ENCODE measurements at regions of chr19 and their contacts with region 1.

Region 1: GRCh38 chr19:11293433-11294389 is 2.2 kb upstream of the TSPAN16 start:
- DNase-seq: peak; percentile 78 to 86
- ATAC-seq: peak; percentile 83 to 90
- H3K4me3 ChIP-seq: peak overlapping the region in 2 of 4 donors; percentile 9 to 24
- H3K27ac ChIP-seq: peak overlapping the region in 3 of 4 donors; percentile 38 to 67 (median 59)
- H3K4me1 ChIP-seq: no peaks in the 10 kb centered on the region
- H3K27me3 ChIP-seq: peaks cover 0 to 5% (median 0%) of the 10 kb centered on the region in 3 donors
- CTCF ChIP-seq: peak; percentile 80 to 93 (median 90)
- POLR2A ChIP-seq: no peak

Region 2: DNA sequence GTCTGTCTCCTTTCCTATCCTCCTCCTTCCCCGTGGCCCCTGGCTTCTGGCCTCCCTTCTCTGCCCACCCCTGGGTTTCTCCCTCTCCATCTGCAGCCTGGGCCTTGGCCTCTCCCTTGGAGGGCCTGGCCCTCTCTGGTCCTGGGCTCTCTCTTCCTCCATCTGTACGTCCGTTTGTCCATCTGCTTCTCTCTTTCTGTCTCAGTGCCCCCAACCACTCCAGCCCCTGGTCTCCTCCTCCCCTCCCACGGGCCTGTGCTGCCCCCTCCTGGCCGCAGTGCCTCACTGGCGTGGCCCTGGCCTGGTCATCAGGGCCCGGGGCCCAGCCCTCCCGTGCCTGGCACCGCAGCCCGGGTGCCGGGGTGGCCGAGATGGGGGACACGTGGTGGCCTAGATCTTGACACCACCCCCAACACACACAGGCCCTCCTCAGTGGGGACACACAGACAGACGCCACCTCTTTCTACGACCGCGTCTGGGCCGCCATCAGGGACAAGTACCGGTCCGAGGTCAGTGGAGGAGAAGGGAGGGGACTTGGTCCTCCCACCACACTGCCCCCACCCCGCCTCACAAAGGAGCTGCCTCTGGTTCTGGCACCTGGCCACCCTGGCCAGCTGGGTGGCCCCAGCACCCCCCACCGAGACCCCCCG is 153.1 kb after region 1 on chr19:
- in situ Hi-C with region 1: no loop called
- intact Hi-C with region 1: loop called (anchors 5 kb)
- DNase-seq: no peak
- ATAC-seq: no peak
- H3K4me3 ChIP-seq: no peak overlapping the region
- H3K27ac ChIP-seq: no peak overlapping the region
- H3K4me1 ChIP-seq: no peaks in the 10 kb centered on the region
- H3K27me3 ChIP-seq: peaks cover 0 to 3% (median 0%) of the 10 kb centered on the region in 3 donors
- CTCF ChIP-seq: peak; percentile 43 to 73 (median 68)
- POLR2A ChIP-seq: no peak

Region 3: GRCh38 chr19:11482384-11483050 is 188.8 kb after region 1 on chr19:
- in situ Hi-C with region 1: no loop called
- intact Hi-C with region 1: loop called (anchors 2 kb)
- DNase-seq: peak; percentile 53 to 54
- ATAC-seq: peak; percentile 84 to 85
- H3K4me3 ChIP-seq: peak overlapping the region; percentile 23 to 51 (median 45)
- H3K27ac ChIP-seq: peak overlapping the region in 1 of 4 donors; percentile 2
- H3K4me1 ChIP-seq: peaks cover 6 to 12% of the 10 kb centered on the region in 2 donors
- H3K27me3 ChIP-seq: peaks cover 35 to 64% (median 43%) of the 10 kb centered on the region in 3 donors
- CTCF ChIP-seq: peak; percentile 72 to 96 (median 93)
- POLR2A ChIP-seq: no peak

Measured in gastrocnemius medialis (tissue), 4 donors.